Right cardiac atrium (tissue), 5 donors: ENCODE measurements at regions of chr6 and their contacts with region 1.

Region 1: GRCh38 chr6:121666814-121667213 is 231.4 kb downstream of the GJA1 start:
- DNase-seq: no peak
- ATAC-seq: peak; percentile 87 to 97
- H3K4me3 ChIP-seq: no peak overlapping the region
- H3K27ac ChIP-seq: no peak overlapping the region
- H3K4me1 ChIP-seq: peaks cover 4% of the 10 kb centered on the region
- H3K27me3 ChIP-seq: no peaks in the 10 kb centered on the region

Region 2: DNA sequence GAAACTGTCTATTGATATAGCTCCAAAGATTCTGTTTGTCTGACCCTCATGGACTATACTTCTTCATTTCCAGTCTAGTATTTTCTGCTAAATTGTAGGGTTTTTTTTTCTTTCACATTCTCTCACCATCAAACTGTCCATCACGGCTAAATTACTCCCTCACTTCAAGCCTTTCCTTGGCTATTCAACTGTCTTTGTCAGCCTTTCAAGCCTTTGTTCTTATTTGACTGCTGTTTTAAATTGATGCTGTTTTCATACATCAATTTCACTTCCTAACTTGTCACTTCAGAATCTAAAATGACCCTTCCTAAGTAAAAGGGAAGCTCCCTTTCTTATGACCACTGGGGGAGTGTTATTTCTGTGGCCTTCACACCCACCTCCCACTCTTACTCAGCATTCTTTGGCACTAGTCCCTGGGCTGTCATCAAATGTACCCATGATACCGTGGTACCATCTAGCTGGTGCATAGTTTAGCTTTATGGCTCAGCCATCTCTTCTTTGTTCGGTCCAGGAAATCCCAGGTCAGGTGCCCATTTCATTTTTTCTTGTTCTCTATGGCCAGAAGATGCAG is 222.8 kb before region 1 on chr6:
- intact Hi-C with region 1: loop called in 1 of 4 experiments (anchors 10 kb)
- DNase-seq: no peak
- ATAC-seq: peak; percentile 81 to 85
- H3K4me3 ChIP-seq: no peak overlapping the region
- H3K27ac ChIP-seq: no peak overlapping the region
- H3K4me1 ChIP-seq: peaks cover 1% of the 10 kb centered on the region
- H3K27me3 ChIP-seq: no peaks in the 10 kb centered on the region

Region 3: DNA sequence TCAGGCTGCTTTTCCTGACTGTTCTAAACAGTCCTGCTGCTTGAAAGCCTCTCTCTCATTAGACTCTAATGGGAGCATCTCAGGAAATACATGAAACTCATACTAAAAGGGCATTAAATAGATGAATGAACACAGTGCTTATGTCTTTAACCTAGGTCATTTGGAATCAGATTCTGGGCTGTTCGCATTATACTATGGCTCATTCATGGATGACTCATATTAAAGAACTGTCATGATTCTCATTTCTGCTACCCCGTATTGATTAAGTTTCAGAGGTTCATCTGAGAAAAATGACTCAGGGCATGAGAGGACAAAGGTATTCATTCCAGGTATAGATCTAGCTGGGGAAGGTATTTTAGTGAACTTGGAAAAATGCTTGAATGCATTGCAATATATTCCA is 104.1 kb after region 1 on chr6:
- intact Hi-C with region 1: no loop called
- DNase-seq: no peak
- ATAC-seq: no peak
- H3K4me3 ChIP-seq: no peak overlapping the region
- H3K27ac ChIP-seq: no peak overlapping the region
- H3K4me1 ChIP-seq: no peaks in the 10 kb centered on the region
- H3K27me3 ChIP-seq: no peaks in the 10 kb centered on the region

Region 4: GRCh38 chr6:122136386-122136785 is 469.6 kb after region 1 on chr6:
- intact Hi-C with region 1: no loop called
- DNase-seq: no peak
- ATAC-seq: no peak
- H3K4me3 ChIP-seq: no peak overlapping the region
- H3K27ac ChIP-seq: no peak overlapping the region
- H3K4me1 ChIP-seq: no peaks in the 10 kb centered on the region
- H3K27me3 ChIP-seq: no peaks in the 10 kb centered on the region